ENCODE measurements at regions of chr1 and their contacts with region 1.

Region 1: DNA sequence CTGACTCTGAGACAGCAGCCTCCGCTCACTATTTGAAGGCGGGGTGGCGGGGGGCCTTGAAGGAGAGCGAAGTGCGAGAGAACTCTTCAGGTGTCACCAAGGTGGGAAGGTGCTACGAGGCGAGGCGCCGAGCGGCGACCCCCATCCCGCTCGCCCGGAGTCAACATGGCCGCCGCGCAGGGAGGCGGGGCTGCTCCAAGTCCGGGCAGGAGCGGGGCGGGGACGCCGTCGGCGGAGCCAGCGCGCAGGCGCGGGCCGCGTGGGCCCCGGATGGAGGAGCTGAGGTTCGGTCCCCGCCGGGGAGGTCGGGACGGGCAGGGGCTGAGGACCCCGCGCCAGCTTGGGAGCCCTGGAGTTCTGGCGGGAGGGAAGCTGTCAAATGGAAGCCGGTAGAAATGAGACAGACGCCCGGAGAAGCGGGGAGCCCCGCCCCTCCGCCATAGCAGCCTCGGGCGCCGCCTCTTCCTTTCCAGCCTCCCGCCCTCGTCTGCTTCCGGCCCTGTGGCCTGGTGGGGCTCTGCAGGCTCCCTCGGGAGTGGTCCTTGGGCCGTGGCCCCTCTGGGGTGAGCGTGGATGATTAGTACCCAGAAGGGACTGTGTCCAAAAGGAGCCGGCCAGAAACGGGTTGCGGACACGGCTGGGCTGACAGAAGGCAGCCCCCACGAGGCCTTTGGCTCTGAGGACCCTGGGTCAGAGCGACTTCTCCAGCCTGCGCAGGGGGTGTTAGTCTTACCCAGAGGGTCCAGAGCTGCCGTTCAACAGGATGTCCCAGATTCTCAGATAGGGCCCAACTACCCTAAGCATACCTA is at the start of gene PIGV:
- DNase-seq: no peak
- ATAC-seq: peak; percentile 78
- H3K4me3 ChIP-seq: peak within 1 kb of the TSS; percentile 72
- H3K27ac ChIP-seq: peak within 1 kb of the TSS; percentile 99
- H3K4me1 ChIP-seq: peaks cover 43% of the 10 kb centered on the region
- H3K27me3 ChIP-seq: no peaks in the 10 kb centered on the region
- CTCF ChIP-seq: no peak
- EP300 ChIP-seq: no peak
- POLR2A ChIP-seq: peak; percentile 73
- RAD21 ChIP-seq: no peak
- polyA plus RNA-seq, gene PIGV: 8.8 to 12.8 TPM

Region 2: GRCh38 chr1:26541816-26542711 is 245.8 kb before region 1 on chr1:
- CTCF ChIA-PET with region 1: interaction called, 51 read pairs
- POLR2A ChIA-PET with region 1: interaction called, 4 read pairs
- RAD21 ChIA-PET with region 1: interaction called, 19 read pairs
- SMC1A ChIA-PET with region 1: interaction called, 4 read pairs
- in situ Hi-C with region 1: no loop called
- intact Hi-C with region 1: loop called (anchors 5 kb)
- DNase-seq: peak; percentile 88
- ATAC-seq: peak; percentile 76
- H3K4me3 ChIP-seq: peak overlapping the region; percentile 95
- H3K27ac ChIP-seq: peak overlapping the region; percentile 97
- H3K4me1 ChIP-seq: peaks cover 68% of the 10 kb centered on the region
- H3K27me3 ChIP-seq: no peaks in the 10 kb centered on the region
- CTCF ChIP-seq: peak; percentile 52 to 82 (median 71)
- EP300 ChIP-seq: peak in 1 of 2 experiments; percentile 59; a peak in 3 of 4 replicates
- POLR2A ChIP-seq: peak; percentile 80
- RAD21 ChIP-seq: no peak; the same call in 1 of the 2 replicates

Region 3: DNA sequence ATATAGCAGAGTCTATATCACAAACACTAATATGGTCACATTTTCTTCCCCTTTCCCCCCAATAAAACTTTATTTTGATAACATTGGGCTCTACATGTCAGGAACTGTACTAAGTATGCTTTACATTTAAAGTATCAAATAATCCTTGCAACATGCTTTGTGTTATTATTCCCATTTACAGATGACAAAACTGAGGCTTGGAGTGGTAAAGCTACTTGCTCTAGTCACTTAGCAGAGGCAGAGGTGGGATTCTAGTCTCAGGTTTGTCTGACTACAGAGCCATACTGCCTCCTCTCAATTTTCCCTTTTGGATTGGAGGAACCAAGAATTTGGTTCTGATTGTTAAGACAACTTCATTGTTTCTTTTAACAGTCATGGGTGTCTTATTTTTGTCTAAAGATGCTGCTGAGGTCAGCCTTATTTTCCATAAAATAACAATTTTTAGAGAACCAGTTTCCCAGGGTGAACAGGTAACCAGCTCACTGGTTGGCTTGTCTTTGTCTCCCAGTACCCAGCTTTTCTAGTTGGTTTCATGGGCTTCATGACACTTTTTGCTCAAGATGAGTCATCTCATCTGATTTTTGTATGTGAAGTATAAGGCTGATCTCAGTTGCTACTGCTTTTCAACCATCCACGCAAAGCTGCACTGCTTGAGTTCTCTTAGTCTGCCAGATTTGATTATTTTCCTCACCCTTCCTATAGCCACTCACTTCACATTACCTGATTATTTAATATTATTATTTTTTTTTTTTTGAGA is 173.1 kb before region 1 on chr1:
- CTCF ChIA-PET with region 1: interaction called, 450 read pairs
- POLR2A ChIA-PET with region 1: interaction called, 3 read pairs
- RAD21 ChIA-PET with region 1: interaction called, 262 read pairs
- SMC1A ChIA-PET with region 1: interaction called, 268 read pairs
- in situ Hi-C with region 1: no loop called
- intact Hi-C with region 1: no loop called
- DNase-seq: no peak
- ATAC-seq: peak; percentile 46; the same call in 2 of the 3 replicates
- H3K4me3 ChIP-seq: no peak overlapping the region
- H3K27ac ChIP-seq: no peak overlapping the region
- H3K4me1 ChIP-seq: peaks cover 13% of the 10 kb centered on the region
- H3K27me3 ChIP-seq: no peaks in the 10 kb centered on the region
- CTCF ChIP-seq: no peak
- EP300 ChIP-seq: no peak
- POLR2A ChIP-seq: no peak
- RAD21 ChIP-seq: no peak

Region 4: GRCh38 chr1:26723013-26723991 is 64.6 kb before region 1 on chr1:
- CTCF ChIA-PET with region 1: interaction called, 18 read pairs
- POLR2A ChIA-PET with region 1: interaction called, 3 read pairs
- RAD21 ChIA-PET with region 1: interaction called, 11 read pairs
- SMC1A ChIA-PET with region 1: interaction called, 28 read pairs
- in situ Hi-C with region 1: no loop called
- intact Hi-C with region 1: no loop called
- DNase-seq: no peak
- ATAC-seq: peak; percentile 61
- H3K4me3 ChIP-seq: peak overlapping the region; percentile 49
- H3K27ac ChIP-seq: peak overlapping the region; percentile 72
- H3K4me1 ChIP-seq: peaks cover 53% of the 10 kb centered on the region
- H3K27me3 ChIP-seq: no peaks in the 10 kb centered on the region
- CTCF ChIP-seq: no peak
- EP300 ChIP-seq: no peak
- POLR2A ChIP-seq: 0 out of 2 replicates have a peak, but pooled peaks have one; percentile 36
- RAD21 ChIP-seq: no peak

Region 5: GRCh38 chr1:26799479-26800142 is 11.7 kb after region 1 on chr1:
- CTCF ChIA-PET with region 1: interaction called, 40 read pairs
- POLR2A ChIA-PET with region 1: interaction called, 8 read pairs
- RAD21 ChIA-PET with region 1: interaction called, 15 read pairs
- SMC1A ChIA-PET with region 1: interaction called, 47 read pairs
- in situ Hi-C with region 1: no loop called
- intact Hi-C with region 1: no loop called
- DNase-seq: no peak
- ATAC-seq: peak; percentile 53
- H3K4me3 ChIP-seq: no peak overlapping the region
- H3K27ac ChIP-seq: peak overlapping the region; percentile 0; the same call in 1 of the 2 replicates
- H3K4me1 ChIP-seq: peaks cover 11% of the 10 kb centered on the region
- H3K27me3 ChIP-seq: no peaks in the 10 kb centered on the region
- CTCF ChIP-seq: no peak
- EP300 ChIP-seq: no peak
- POLR2A ChIP-seq: no peak
- RAD21 ChIP-seq: no peak

Region 6: DNA sequence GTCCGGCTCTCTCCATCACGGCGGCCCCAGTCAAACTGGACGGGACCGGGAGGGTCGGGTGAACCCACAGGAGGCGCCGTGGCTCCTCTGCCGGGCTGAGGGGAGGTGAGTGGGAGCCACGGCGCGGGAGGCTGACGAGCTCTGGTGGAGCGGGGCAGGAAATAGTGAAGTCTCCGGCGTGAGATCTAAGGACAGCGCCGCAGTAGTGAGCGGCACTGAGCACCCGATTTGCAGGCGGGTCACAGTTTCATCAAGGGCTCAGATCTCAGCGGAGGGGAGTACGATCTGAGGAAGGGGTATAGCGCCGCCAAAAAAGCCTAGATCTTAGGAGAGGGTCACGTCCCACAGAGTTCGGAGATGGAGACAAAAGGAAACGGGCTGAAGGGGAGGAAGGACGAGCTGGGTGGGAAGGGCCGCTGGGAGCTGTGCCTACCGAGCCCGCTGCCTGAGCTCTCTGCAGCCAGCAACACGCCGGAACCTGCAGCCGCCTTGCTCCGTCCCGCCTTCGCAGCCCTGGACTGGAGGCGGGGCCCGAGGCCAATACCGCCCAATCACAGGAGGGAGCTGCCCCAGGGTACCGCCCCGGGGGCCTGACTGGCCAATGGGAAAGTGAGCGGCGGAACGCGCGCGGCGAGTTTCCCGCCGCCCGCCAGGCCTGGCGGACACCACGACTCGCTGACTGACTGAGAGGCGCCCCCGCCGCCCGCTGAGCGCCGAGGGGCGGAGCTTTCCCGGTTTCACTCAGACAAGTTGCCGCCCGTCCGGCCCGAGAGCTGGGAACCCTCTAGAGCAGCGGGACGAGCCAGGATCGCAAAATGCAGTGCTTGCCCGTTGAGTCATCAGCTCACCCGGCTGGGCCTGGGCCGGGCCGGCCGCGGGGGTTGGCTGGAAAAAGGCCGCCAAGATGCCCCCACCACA is 77.0 kb after region 1 on chr1:
- CTCF ChIA-PET with region 1: interaction called, 5 read pairs
- POLR2A ChIA-PET with region 1: interaction called, 6 read pairs
- RAD21 ChIA-PET with region 1: interaction called, 11 read pairs
- SMC1A ChIA-PET with region 1: interaction called, 5 read pairs
- in situ Hi-C with region 1: no loop called
- intact Hi-C with region 1: no loop called
- DNase-seq: peak; percentile 91
- ATAC-seq: peak; percentile 96
- H3K4me3 ChIP-seq: peak overlapping the region; percentile 93
- H3K27ac ChIP-seq: peak overlapping the region; percentile 99
- H3K4me1 ChIP-seq: peaks cover 16% of the 10 kb centered on the region
- H3K27me3 ChIP-seq: no peaks in the 10 kb centered on the region
- CTCF ChIP-seq: no peak
- EP300 ChIP-seq: 0 out of 4 replicates have a peak, but pooled peaks of 1 of the 2 experiments have one; percentile 18
- POLR2A ChIP-seq: peak; percentile 98
- RAD21 ChIP-seq: no peak

Measured in GM12878 (cell line).